Naive thymus-derived CD4-positive, alpha-beta T cell (primary cell): ENCODE measurements at regions of chr12 and their contacts with region 1.

Region 1: DNA sequence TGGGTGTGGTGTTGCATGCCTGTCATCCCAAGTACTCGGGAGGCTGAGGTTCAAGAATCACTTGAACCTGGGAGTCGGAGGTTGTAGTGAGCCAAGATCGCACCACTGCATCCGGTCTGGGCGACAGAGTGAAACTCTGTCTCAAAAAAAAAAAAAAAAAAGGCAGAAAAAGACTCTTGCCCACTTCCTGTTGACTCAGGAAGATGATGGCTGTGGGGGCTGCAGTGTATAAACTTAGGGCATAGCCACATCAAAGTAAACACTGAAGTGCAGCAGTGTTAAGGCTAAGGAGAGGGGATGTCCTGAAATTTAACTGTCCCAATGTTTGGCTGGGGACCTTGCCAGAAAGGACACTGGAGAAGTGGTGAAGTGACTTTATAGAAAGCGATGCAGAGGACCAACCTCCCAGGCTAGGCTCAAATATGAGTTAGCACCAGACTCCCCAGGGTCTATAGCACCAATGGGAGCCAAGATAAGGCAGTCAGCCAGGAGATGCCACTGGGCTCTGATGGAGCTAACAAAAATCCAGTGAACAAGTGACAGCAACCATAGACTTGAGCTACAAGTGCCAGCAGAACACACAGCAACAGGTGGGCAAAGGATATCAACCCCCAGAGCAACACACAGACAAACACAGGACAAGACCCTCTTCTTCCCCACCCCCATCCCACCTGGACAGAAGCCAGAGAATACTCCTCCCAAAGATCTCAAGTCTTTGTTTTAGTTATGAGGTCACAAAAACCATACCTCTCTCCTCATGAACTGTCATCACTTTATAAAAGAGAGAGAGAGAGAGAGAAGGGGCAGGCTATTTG is 28.0 kb downstream of the NELL2 start:
- DNase-seq: peak; percentile 29 to 86 (median 79)
- ATAC-seq: peak; percentile 93
- H3K4me3 ChIP-seq: peak overlapping the region; percentile 30
- H3K4me3 Mint-ChIP-seq: peak overlapping the region; percentile 65 to 84 (median 78)
- H3K27ac ChIP-seq: peak overlapping the region; percentile 62
- H3K27ac Mint-ChIP-seq: peak overlapping the region; percentile 90 to 99 (median 97)
- H3K4me1 ChIP-seq: peaks cover 67 to 77% of the 10 kb centered on the region in 2 donors
- H3K4me1 Mint-ChIP-seq: peaks cover 27 to 95% (median 84%) of the 10 kb centered on the region in 7 donors
- H3K27me3 ChIP-seq: no peaks in the 10 kb centered on the region
- H3K27me3 Mint-ChIP-seq: no peaks in the 10 kb centered on the region

Region 2: GRCh38 chr12:44812062-44812461 is 36.0 kb before region 1 on chr12:
- CTCF ChIA-PET with region 1: interaction called, 3 read pairs
- POLR2A ChIA-PET with region 1: interaction called, 10 read pairs
- intact Hi-C with region 1: loop called (anchors 1 to 2 kb)
- DNase-seq: peak in 7 of 9 donors; percentile 42 to 65 (median 60)
- ATAC-seq: peak; percentile 79
- H3K4me3 ChIP-seq: no peak overlapping the region
- H3K4me3 Mint-ChIP-seq: peak overlapping the region in 3 of 10 donors; percentile 14 to 38 (median 34)
- H3K27ac ChIP-seq: no peak overlapping the region
- H3K27ac Mint-ChIP-seq: peak overlapping the region in 6 of 9 donors; percentile 21 to 77 (median 41)
- H3K4me1 ChIP-seq: peaks cover 14 to 15% of the 10 kb centered on the region in 2 donors
- H3K4me1 Mint-ChIP-seq: peaks cover 8 to 50% (median 38%) of the 10 kb centered on the region in 7 donors
- H3K27me3 ChIP-seq: no peaks in the 10 kb centered on the region
- H3K27me3 Mint-ChIP-seq: no peaks in the 10 kb centered on the region

Region 3: DNA sequence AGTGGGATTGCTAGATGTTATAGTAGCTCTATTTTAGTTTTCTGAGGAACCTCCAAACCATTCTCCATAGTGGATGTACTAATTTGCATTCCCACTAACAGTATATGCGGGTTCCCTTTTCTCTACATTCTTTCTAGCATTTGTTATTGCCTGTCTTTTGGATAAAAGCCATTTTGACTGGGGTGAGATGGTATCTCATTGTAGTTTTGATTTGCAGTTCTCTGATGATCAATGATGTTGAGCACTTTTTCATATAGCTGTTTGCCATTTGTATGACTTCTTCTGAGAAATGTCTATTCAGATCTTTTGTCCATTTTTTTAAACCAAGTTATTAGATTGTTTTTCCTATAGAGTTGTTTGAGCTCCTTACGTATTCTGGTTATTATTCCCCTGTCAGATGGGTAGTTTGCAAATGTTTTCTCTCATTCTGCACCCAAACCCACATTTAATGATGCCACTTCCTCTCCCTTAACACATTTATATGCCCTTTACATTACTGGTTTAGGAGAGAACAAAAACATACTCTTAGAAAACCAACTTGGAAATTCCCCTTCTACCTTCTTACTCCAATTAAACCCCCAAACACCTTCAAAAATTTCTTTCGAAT is 20.2 kb before region 1 on chr12:
- CTCF ChIA-PET with region 1: interaction called, 7 read pairs
- POLR2A ChIA-PET with region 1: interaction called, 60 read pairs
- intact Hi-C with region 1: loop called (anchors 1 kb)
- DNase-seq: peak in 7 of 9 donors; percentile 44 to 82 (median 72)
- ATAC-seq: peak; percentile 92
- H3K4me3 ChIP-seq: peak overlapping the region; percentile 31
- H3K4me3 Mint-ChIP-seq: peak overlapping the region; percentile 56 to 81 (median 76)
- H3K27ac ChIP-seq: peak overlapping the region; percentile 74
- H3K27ac Mint-ChIP-seq: peak overlapping the region; percentile 84 to 99 (median 92)
- H3K4me1 ChIP-seq: peaks cover 28 to 36% of the 10 kb centered on the region in 2 donors
- H3K4me1 Mint-ChIP-seq: peaks cover 13 to 85% (median 66%) of the 10 kb centered on the region in 7 donors
- H3K27me3 ChIP-seq: no peaks in the 10 kb centered on the region
- H3K27me3 Mint-ChIP-seq: no peaks in the 10 kb centered on the region

Region 4: DNA sequence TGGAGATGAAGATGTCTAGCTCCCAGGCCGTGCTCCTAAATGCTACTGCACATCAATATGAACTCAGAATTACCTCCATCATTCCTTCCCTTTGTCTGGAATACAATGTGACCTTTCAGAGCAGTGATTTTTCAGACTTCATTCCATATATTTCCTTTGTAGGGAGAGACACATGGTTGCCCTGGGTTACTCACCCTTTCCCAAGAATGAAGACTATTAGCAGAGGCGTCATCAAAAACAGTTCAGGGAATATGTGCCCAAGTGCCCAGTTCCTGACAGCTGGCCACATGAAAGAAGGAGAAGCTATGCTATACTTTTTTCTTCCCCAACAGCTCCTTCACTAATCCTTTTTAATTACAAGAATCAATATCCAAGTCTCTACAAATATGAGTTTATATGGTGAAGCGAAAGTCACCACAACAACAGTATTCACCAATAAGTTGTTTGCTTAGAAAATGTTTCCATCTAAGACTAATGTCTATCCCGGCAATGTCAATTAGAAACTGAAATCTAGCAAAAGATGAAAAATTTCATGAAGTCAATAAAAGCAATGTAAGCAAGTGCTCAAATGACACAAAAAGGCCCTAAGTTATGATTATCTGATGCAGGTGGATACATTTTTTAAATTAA is 10.2 kb after region 1 on chr12:
- CTCF ChIA-PET with region 1: interaction called, 3 read pairs
- POLR2A ChIA-PET with region 1: interaction called, 21 read pairs
- intact Hi-C with region 1: loop called in 1 of 2 experiments (anchors 1 kb)
- DNase-seq: no peak
- ATAC-seq: no peak
- H3K4me3 ChIP-seq: no peak overlapping the region
- H3K4me3 Mint-ChIP-seq: peak overlapping the region in 7 of 10 donors; percentile 0 to 68 (median 24)
- H3K27ac ChIP-seq: no peak overlapping the region
- H3K27ac Mint-ChIP-seq: peak overlapping the region in 7 of 9 donors; percentile 6 to 98 (median 53)
- H3K4me1 ChIP-seq: peaks cover 18 to 43% of the 10 kb centered on the region in 2 donors
- H3K4me1 Mint-ChIP-seq: peaks cover 34 to 93% (median 64%) of the 10 kb centered on the region in 7 donors
- H3K27me3 ChIP-seq: no peaks in the 10 kb centered on the region
- H3K27me3 Mint-ChIP-seq: no peaks in the 10 kb centered on the region

Region 5: DNA sequence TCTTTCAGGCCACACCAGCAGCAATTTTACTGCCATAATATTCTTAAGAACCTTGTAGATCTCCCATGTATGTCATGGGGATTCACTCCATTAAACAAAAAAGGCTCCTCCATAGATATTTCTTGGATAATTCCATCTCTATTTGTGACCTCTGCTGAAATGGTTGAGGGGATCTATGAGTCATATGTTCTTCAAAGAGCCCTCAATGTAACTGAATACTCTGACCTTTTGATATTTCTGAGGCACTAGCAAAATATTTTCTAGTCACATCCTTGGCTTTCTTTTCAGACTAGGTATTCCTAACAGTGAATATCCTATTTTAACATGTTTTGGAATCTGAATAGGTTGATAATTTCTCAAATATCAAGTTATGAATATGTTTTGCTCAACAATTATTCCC is 21.4 kb after region 1 on chr12:
- CTCF ChIA-PET with region 1: interaction called, 23 read pairs
- POLR2A ChIA-PET with region 1: interaction called, 21 read pairs
- intact Hi-C with region 1: loop called (anchors 1 kb)
- DNase-seq: no peak
- ATAC-seq: no peak
- H3K4me3 ChIP-seq: no peak overlapping the region
- H3K4me3 Mint-ChIP-seq: peak overlapping the region in 3 of 10 donors; percentile 40 to 91 (median 44)
- H3K27ac ChIP-seq: no peak overlapping the region
- H3K27ac Mint-ChIP-seq: peak overlapping the region in 6 of 9 donors; percentile 34 to 82 (median 58)
- H3K4me1 ChIP-seq: peaks cover 4 to 12% of the 10 kb centered on the region in 2 donors
- H3K4me1 Mint-ChIP-seq: peaks cover 11 to 70% (median 48%) of the 10 kb centered on the region in 7 donors
- H3K27me3 ChIP-seq: no peaks in the 10 kb centered on the region
- H3K27me3 Mint-ChIP-seq: peaks cover 0 to 19% (median 2%) of the 10 kb centered on the region in 5 donors